H1 (cell line): ENCODE measurements at regions of chr7 and their contacts with region 1.

Region 1: GRCh38 chr7:7424151-7424873 is 111.4 kb downstream of the COL28A1 start:
- DNase-seq: peak; percentile 19 to 59
- H3K4me3 ChIP-seq: no peak overlapping the region
- H3K27ac ChIP-seq: no peak overlapping the region
- H3K4me1 ChIP-seq: peaks cover 0 to 4% (median 0%) of the 10 kb centered on the region in 4 experiments; a peak in 1 of 7 replicates
- H3K27me3 ChIP-seq: no peaks in the 10 kb centered on the region
- CTCF ChIP-seq: peak; percentile 67 to 83 (median 79)
- EP300 ChIP-seq: no peak
- POLR2A ChIP-seq: no peak
- RAD21 ChIP-seq: peak; percentile 95

Region 2: GRCh38 chr7:7438851-7439250 is 14.5 kb after region 1 on chr7:
- CTCF ChIA-PET with region 1: interaction called, 22 read pairs
- POLR2A ChIA-PET with region 1: no interaction called
- DNase-seq: peak in 1 of 2 experiments; percentile 10
- H3K4me3 ChIP-seq: no peak overlapping the region
- H3K27ac ChIP-seq: no peak overlapping the region
- H3K4me1 ChIP-seq: no peaks in the 10 kb centered on the region; a peak in 1 of 7 replicates
- H3K27me3 ChIP-seq: peaks cover 0 to 1% (median 0%) of the 10 kb centered on the region in 4 experiments; a peak in 1 of 7 replicates
- CTCF ChIP-seq: no peak
- EP300 ChIP-seq: no peak
- POLR2A ChIP-seq: no peak
- RAD21 ChIP-seq: no peak

Region 3: GRCh38 chr7:7449055-7449454 is 24.7 kb after region 1 on chr7:
- CTCF ChIA-PET with region 1: no interaction called
- POLR2A ChIA-PET with region 1: no interaction called
- DNase-seq: no peak
- H3K4me3 ChIP-seq: no peak overlapping the region
- H3K27ac ChIP-seq: no peak overlapping the region
- H3K4me1 ChIP-seq: no peaks in the 10 kb centered on the region
- H3K27me3 ChIP-seq: no peaks in the 10 kb centered on the region
- CTCF ChIP-seq: no peak
- EP300 ChIP-seq: no peak
- POLR2A ChIP-seq: no peak
- RAD21 ChIP-seq: no peak

Region 4: DNA sequence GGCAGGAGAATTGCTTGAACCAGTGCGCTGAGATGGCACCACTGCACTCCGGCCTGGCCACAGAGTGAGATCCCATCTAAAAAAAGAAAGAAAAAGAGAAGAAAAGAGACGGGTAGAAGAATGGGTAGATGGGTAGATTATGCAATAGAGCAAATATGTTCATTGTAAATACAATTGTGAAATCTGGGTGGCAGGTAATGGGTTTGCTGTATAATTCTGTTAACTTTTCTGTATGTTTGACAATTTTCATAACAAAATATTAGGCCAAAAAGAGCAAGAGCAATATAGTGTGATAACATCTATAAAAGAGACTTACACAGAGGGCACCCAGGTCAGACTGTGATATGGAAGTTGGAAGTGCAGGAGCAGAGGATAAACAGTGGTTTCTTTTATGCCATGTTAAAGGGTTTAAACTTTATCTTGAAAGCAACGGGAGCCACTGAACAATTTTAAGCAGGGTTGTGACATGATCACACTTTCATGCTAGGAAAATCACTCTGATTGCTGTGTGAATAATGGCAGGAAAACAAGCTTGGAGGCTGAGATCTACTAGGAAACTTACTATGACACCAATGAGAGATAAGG is 118.0 kb after region 1 on chr7:
- CTCF ChIA-PET with region 1: interaction called, 20 read pairs
- POLR2A ChIA-PET with region 1: no interaction called
- DNase-seq: no peak
- H3K4me3 ChIP-seq: no peak overlapping the region
- H3K27ac ChIP-seq: no peak overlapping the region
- H3K4me1 ChIP-seq: no peaks in the 10 kb centered on the region
- H3K27me3 ChIP-seq: no peaks in the 10 kb centered on the region
- CTCF ChIP-seq: no peak
- EP300 ChIP-seq: no peak
- POLR2A ChIP-seq: no peak
- RAD21 ChIP-seq: no peak

Region 5: DNA sequence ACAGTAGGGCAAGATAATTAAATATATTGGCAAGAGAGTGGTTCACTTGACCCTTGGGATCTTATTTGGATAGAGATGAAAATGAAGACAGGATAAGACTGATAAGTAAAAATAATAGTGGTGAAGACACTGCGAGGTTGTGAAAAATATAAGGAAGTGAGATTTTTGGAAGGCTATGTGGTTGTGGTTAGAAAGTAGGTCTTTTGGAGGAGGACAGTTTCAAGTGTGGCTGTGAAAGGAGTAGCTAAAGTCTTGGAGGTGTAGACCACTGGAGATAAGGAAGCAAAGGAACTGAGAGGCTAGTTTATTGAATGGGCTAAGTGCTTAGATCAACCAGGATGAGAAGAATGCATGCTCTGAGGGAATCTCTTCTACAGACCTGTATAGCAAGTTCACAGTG is 153.6 kb after region 1 on chr7:
- CTCF ChIA-PET with region 1: no interaction called
- POLR2A ChIA-PET with region 1: no interaction called
- DNase-seq: no peak
- H3K4me3 ChIP-seq: no peak overlapping the region
- H3K27ac ChIP-seq: no peak overlapping the region
- H3K4me1 ChIP-seq: peaks cover 2 to 5% (median 3%) of the 10 kb centered on the region in 4 experiments; a peak in 5 of 7 replicates
- H3K27me3 ChIP-seq: no peaks in the 10 kb centered on the region
- CTCF ChIP-seq: no peak
- EP300 ChIP-seq: no peak
- POLR2A ChIP-seq: no peak
- RAD21 ChIP-seq: no peak